CD8-positive, alpha-beta T cell (primary cell): ENCODE measurements at regions of chr12 and their contacts with region 1.

Region 1: GRCh38 chr12:6285063-6285477 is 25.4 kb upstream of the PLEKHG6 start:
- DNase-seq: peak in 8 of 9 experiments; percentile 43 to 80 (median 66)
- ATAC-seq: peak; percentile 91
- H3K4me3 ChIP-seq: no peak overlapping the region
- H3K4me3 Mint-ChIP-seq: no peak overlapping the region
- H3K27ac ChIP-seq: no peak overlapping the region
- H3K27ac Mint-ChIP-seq: no peak overlapping the region
- H3K4me1 ChIP-seq: no peaks in the 10 kb centered on the region
- H3K4me1 Mint-ChIP-seq: peaks cover 4% of the 10 kb centered on the region
- H3K27me3 ChIP-seq: peaks cover 0 to 4% of the 10 kb centered on the region in 2 experiments
- H3K27me3 Mint-ChIP-seq: peaks cover 17% of the 10 kb centered on the region
- CTCF ChIP-seq: peak; percentile 83

Region 2: DNA sequence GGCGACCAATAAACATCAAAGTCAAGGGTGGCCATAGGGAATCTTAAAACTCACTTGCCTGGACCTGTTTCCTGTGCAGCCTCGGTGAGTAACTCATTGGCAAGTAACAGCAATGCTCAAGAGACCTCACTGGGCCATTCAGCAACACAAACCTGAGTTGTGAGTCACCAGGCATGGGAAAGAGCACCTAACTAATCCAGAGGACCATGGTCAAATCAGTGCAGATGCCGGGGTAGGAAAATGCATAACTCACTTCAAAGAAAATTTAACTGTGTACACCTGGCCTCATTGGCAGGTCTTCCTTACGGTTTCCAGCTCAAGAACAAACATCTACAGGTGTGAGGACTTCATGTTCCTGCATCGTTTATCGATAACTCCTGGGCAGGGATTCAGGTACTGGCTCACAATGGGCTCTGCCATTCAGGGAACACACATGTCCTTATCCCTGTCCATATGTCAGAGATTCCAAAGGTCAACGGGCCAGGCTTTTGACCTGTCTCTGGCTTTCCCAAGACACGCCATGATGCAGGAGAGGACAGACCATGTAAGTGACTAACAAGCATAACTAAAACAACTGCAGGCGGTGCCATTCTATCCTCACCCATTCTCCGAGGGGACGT is 551.8 kb before region 1 on chr12:
- CTCF ChIA-PET with region 1: no interaction called
- POLR2A ChIA-PET with region 1: no interaction called
- intact Hi-C with region 1: no loop called
- DNase-seq: no peak
- ATAC-seq: no peak
- H3K4me3 ChIP-seq: no peak overlapping the region
- H3K4me3 Mint-ChIP-seq: no peak overlapping the region
- H3K27ac ChIP-seq: no peak overlapping the region
- H3K27ac Mint-ChIP-seq: no peak overlapping the region
- H3K4me1 ChIP-seq: no peaks in the 10 kb centered on the region
- H3K4me1 Mint-ChIP-seq: no peaks in the 10 kb centered on the region
- H3K27me3 ChIP-seq: no peaks in the 10 kb centered on the region
- H3K27me3 Mint-ChIP-seq: no peaks in the 10 kb centered on the region
- CTCF ChIP-seq: no peak

Region 3: GRCh38 chr12:6056406-6057240 is 228.4 kb before region 1 on chr12:
- CTCF ChIA-PET with region 1: interaction called, 61 read pairs
- POLR2A ChIA-PET with region 1: no interaction called
- intact Hi-C with region 1: loop called in 1 of 2 experiments (anchors 1 kb)
- DNase-seq: peak in 8 of 9 experiments; percentile 20 to 78 (median 58)
- ATAC-seq: peak; percentile 94
- H3K4me3 ChIP-seq: peak overlapping the region; percentile 35 to 54
- H3K4me3 Mint-ChIP-seq: peak overlapping the region; percentile 79
- H3K27ac ChIP-seq: peak overlapping the region in 1 of 2 experiments; percentile 31
- H3K27ac Mint-ChIP-seq: peak overlapping the region; percentile 91
- H3K4me1 ChIP-seq: peaks cover 8% of the 10 kb centered on the region
- H3K4me1 Mint-ChIP-seq: peaks cover 12% of the 10 kb centered on the region
- H3K27me3 ChIP-seq: no peaks in the 10 kb centered on the region
- H3K27me3 Mint-ChIP-seq: no peaks in the 10 kb centered on the region
- CTCF ChIP-seq: peak; percentile 33

Region 4: GRCh38 chr12:6062757-6063735 is 222.0 kb before region 1 on chr12:
- CTCF ChIA-PET with region 1: interaction called, 61 read pairs
- POLR2A ChIA-PET with region 1: no interaction called
- intact Hi-C with region 1: loop called (anchors 1 kb)
- DNase-seq: peak; percentile 39 to 81 (median 64)
- ATAC-seq: peak; percentile 99
- H3K4me3 ChIP-seq: no peak overlapping the region
- H3K4me3 Mint-ChIP-seq: no peak overlapping the region
- H3K27ac ChIP-seq: no peak overlapping the region
- H3K27ac Mint-ChIP-seq: no peak overlapping the region
- H3K4me1 ChIP-seq: no peaks in the 10 kb centered on the region
- H3K4me1 Mint-ChIP-seq: peaks cover 3% of the 10 kb centered on the region
- H3K27me3 ChIP-seq: no peaks in the 10 kb centered on the region
- H3K27me3 Mint-ChIP-seq: peaks cover 3% of the 10 kb centered on the region
- CTCF ChIP-seq: peak; percentile 84

Region 5: GRCh38 chr12:6074979-6075585 is 210.0 kb before region 1 on chr12:
- CTCF ChIA-PET with region 1: interaction called, 10 read pairs
- POLR2A ChIA-PET with region 1: no interaction called
- intact Hi-C with region 1: no loop called
- DNase-seq: peak in 6 of 9 experiments; percentile 20 to 72 (median 42)
- ATAC-seq: peak; percentile 60
- H3K4me3 ChIP-seq: peak overlapping the region; percentile 35 to 43
- H3K4me3 Mint-ChIP-seq: peak overlapping the region; percentile 80
- H3K27ac ChIP-seq: no peak overlapping the region
- H3K27ac Mint-ChIP-seq: no peak overlapping the region
- H3K4me1 ChIP-seq: peaks cover 20% of the 10 kb centered on the region
- H3K4me1 Mint-ChIP-seq: peaks cover 26% of the 10 kb centered on the region
- H3K27me3 ChIP-seq: no peaks in the 10 kb centered on the region
- H3K27me3 Mint-ChIP-seq: peaks cover 5% of the 10 kb centered on the region
- CTCF ChIP-seq: no peak

Region 6: GRCh38 chr12:6167327-6168259 is 117.5 kb before region 1 on chr12:
- CTCF ChIA-PET with region 1: no interaction called
- POLR2A ChIA-PET with region 1: no interaction called
- intact Hi-C with region 1: no loop called
- DNase-seq: peak in 8 of 9 experiments; percentile 12 to 58 (median 40)
- ATAC-seq: peak; percentile 60
- H3K4me3 ChIP-seq: no peak overlapping the region
- H3K4me3 Mint-ChIP-seq: peak overlapping the region; percentile 27
- H3K27ac ChIP-seq: peak overlapping the region in 1 of 2 experiments; percentile 31
- H3K27ac Mint-ChIP-seq: peak overlapping the region; percentile 16
- H3K4me1 ChIP-seq: peaks cover 28% of the 10 kb centered on the region
- H3K4me1 Mint-ChIP-seq: peaks cover 35% of the 10 kb centered on the region
- H3K27me3 ChIP-seq: no peaks in the 10 kb centered on the region
- H3K27me3 Mint-ChIP-seq: peaks cover 2% of the 10 kb centered on the region
- CTCF ChIP-seq: no peak

Region 7: DNA sequence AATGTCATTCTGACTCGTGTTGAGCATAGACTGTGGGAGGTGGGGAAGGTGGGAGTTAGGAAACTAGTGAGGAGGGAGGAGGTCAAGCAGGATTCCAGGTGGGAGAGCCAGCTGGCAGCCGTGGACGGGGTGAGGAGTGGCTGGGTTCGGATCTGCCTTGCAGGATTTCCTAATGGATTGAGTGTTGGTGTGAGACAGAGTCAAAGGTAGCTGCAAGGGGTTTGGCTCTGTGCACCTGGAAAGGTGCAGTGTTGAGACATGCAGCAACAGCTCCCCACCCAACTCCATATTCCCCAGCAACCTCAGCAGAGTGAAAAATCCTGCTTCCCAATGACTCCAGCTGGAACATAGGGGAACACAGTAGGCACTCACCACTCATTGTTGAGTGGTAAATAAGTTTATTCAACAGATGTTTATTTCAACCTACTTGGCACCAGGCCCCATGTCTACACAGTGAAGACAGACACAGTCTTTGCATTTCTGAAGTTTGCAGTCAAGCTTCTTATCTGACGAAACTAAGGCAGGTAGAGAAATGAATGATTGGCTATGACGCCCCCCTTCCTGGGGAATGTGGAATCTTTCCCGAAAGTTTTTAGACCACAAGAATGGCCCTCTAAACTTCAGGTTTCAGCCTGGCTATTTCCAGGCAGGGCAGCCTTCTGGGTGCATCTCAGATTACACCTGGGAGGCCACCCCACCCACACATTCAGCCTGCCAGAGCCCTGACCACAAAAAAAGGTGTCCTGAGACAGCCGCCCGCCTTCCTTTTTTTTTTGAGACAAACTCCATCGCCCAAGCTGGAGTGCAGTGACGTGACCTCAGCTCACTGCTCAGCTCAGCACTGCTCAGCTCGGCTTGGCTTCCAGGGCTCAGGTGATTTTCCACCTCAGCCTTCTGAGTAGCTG is 12.5 kb before region 1 on chr12:
- CTCF ChIA-PET with region 1: interaction called, 29 read pairs
- POLR2A ChIA-PET with region 1: no interaction called
- intact Hi-C with region 1: no loop called
- DNase-seq: no peak
- ATAC-seq: no peak
- H3K4me3 ChIP-seq: no peak overlapping the region
- H3K4me3 Mint-ChIP-seq: no peak overlapping the region
- H3K27ac ChIP-seq: no peak overlapping the region
- H3K27ac Mint-ChIP-seq: no peak overlapping the region
- H3K4me1 ChIP-seq: no peaks in the 10 kb centered on the region
- H3K4me1 Mint-ChIP-seq: no peaks in the 10 kb centered on the region
- H3K27me3 ChIP-seq: no peaks in the 10 kb centered on the region
- H3K27me3 Mint-ChIP-seq: peaks cover 9% of the 10 kb centered on the region
- CTCF ChIP-seq: no peak

Region 8: GRCh38 chr12:6416596-6416995 is 131.5 kb after region 1 on chr12:
- CTCF ChIA-PET with region 1: no interaction called
- POLR2A ChIA-PET with region 1: no interaction called
- intact Hi-C with region 1: no loop called
- DNase-seq: no peak
- ATAC-seq: no peak
- H3K4me3 ChIP-seq: no peak overlapping the region
- H3K4me3 Mint-ChIP-seq: no peak overlapping the region
- H3K27ac ChIP-seq: no peak overlapping the region
- H3K27ac Mint-ChIP-seq: no peak overlapping the region
- H3K4me1 ChIP-seq: no peaks in the 10 kb centered on the region
- H3K4me1 Mint-ChIP-seq: peaks cover 2% of the 10 kb centered on the region
- H3K27me3 ChIP-seq: no peaks in the 10 kb centered on the region
- H3K27me3 Mint-ChIP-seq: no peaks in the 10 kb centered on the region
- CTCF ChIP-seq: no peak